CD4-positive, alpha-beta T cell (primary cell): ENCODE measurements at regions of chr12 and their contacts with region 1.

Region 1: DNA sequence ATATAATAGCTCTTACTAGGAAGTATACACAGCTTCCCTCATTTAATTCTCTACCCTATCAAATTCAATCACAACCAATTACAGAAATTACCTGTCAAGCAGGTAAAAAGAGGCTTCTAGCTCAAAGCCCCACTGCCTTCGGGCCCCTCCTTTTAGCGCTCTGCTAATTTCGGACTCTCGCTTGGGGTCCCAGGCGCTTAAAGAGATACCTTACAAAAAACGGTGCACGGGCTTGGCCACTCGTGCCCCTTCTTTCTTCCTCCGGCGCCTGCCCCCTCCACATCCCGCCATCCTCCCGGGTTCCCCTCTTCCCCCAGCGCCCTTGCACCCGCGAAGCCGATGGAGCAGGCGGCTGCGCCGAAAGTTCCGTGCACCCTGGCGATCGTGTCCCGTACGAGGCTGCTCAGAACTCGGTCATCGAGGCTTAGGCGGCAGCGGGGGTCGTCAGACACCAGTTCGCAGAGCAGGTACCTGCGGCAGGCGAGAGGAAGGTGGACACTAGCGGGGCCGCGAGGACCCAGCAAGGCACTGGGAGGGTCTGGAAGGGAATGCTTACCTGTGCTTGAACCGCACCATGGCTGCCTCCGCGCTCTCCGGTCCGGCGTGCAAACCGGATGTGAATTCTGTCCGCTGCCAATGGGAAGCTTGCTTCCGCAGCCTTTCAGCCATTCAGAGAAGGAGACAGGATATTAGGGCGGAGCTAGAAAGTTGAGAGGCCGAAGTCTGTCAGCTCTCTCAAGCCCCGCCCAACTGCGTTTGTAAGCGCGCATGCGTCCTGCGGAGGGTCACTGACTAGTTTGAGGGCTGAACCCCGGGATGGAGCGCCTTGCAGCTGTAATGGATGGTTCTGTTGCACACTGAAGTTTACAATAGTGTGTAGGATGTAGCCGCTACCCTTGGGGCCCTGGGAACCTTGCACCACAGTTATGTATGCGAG is at the start of gene POP5:
- DNase-seq: peak; percentile 80 to 97 (median 90)
- ATAC-seq: peak; percentile 90
- H3K4me3 ChIP-seq: peak within 1 kb of the TSS; percentile 92
- H3K4me3 Mint-ChIP-seq: peak within 1 kb of the TSS; percentile 97
- H3K27ac ChIP-seq: peak within 1 kb of the TSS; percentile 66 to 69
- H3K27ac Mint-ChIP-seq: peak within 1 kb of the TSS; percentile 85
- H3K4me1 ChIP-seq: peaks cover 32% of the 10 kb centered on the region
- H3K4me1 Mint-ChIP-seq: peaks cover 45% of the 10 kb centered on the region
- H3K27me3 ChIP-seq: no peaks in the 10 kb centered on the region
- H3K27me3 Mint-ChIP-seq: peaks cover 21% of the 10 kb centered on the region
- CTCF ChIP-seq: no peak
- total RNA-seq, gene POP5: 17.9 to 22.0 TPM

Region 2: GRCh38 chr12:120528861-120529525 is 52.1 kb before region 1 on chr12 and contains the start of gene COQ5:
- CTCF ChIA-PET with region 1: no interaction called
- POLR2A ChIA-PET with region 1: interaction called, 11 read pairs
- intact Hi-C with region 1: loop called in 1 of 2 experiments (anchors 1 kb)
- DNase-seq: peak; percentile 70 to 89 (median 79)
- ATAC-seq: peak; percentile 97
- H3K4me3 ChIP-seq: peak within 1 kb of the TSS; percentile 92
- H3K4me3 Mint-ChIP-seq: peak within 1 kb of the TSS; percentile 100
- H3K27ac ChIP-seq: peak within 1 kb of the TSS; percentile 69 to 73
- H3K27ac Mint-ChIP-seq: peak within 1 kb of the TSS; percentile 95
- H3K4me1 ChIP-seq: peaks cover 27% of the 10 kb centered on the region
- H3K4me1 Mint-ChIP-seq: peaks cover 32% of the 10 kb centered on the region
- H3K27me3 ChIP-seq: no peaks in the 10 kb centered on the region
- H3K27me3 Mint-ChIP-seq: no peaks in the 10 kb centered on the region
- CTCF ChIP-seq: no peak
- total RNA-seq, gene COQ5: 6.9 to 7.1 TPM

Region 3: GRCh38 chr12:120554678-120555077 is 26.4 kb before region 1 on chr12:
- CTCF ChIA-PET with region 1: no interaction called
- POLR2A ChIA-PET with region 1: interaction called, 13 read pairs
- intact Hi-C with region 1: no loop called
- DNase-seq: no peak
- ATAC-seq: no peak
- H3K4me3 ChIP-seq: no peak overlapping the region
- H3K4me3 Mint-ChIP-seq: no peak overlapping the region
- H3K27ac ChIP-seq: no peak overlapping the region
- H3K27ac Mint-ChIP-seq: peak overlapping the region; percentile 58
- H3K4me1 ChIP-seq: peaks cover 11% of the 10 kb centered on the region
- H3K4me1 Mint-ChIP-seq: peaks cover 15% of the 10 kb centered on the region
- H3K27me3 ChIP-seq: no peaks in the 10 kb centered on the region
- H3K27me3 Mint-ChIP-seq: no peaks in the 10 kb centered on the region
- CTCF ChIP-seq: no peak

Region 4: DNA sequence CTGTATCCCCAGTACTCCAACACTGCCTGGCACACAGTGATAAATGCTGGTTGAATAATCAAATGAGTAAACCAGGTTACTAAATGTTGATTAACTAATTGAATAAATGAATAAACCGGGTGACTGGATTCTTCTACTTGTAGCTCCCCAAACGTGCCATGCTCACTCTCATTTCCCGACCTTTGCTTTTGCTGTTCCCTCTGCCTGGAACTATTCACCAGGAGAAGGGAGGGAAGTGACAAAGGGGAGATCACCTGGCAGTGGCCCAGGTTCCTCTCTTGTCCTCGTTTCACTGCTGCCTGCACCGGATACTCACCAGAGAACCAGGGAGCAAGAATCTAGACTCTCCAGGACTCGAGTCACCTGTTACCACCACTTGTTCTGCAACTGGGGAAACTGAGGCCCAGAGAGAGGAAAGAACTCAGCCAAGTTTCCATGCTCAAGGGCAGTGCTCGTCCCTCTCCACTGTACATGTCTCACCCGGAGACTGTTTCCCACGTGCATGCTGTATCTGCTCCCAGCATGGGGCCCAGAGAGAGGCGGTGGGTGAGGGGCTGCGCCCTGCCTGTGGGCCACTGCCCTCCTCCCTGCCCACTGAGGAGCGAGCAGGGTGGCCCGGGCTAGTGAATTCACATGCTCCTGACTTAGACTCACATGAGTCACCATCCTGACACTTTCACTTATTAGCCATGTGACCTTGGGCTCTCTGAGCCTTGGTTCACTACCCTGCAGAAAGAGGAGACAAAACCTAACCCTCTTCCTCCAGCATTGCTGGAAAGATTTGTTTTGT is 17.8 kb after region 1 on chr12:
- CTCF ChIA-PET with region 1: no interaction called
- POLR2A ChIA-PET with region 1: no interaction called
- intact Hi-C with region 1: no loop called
- DNase-seq: peak in 2 of 14 experiments; percentile 47 to 56
- ATAC-seq: no peak
- H3K4me3 ChIP-seq: no peak overlapping the region
- H3K4me3 Mint-ChIP-seq: no peak overlapping the region
- H3K27ac ChIP-seq: no peak overlapping the region
- H3K27ac Mint-ChIP-seq: no peak overlapping the region
- H3K4me1 ChIP-seq: no peaks in the 10 kb centered on the region
- H3K4me1 Mint-ChIP-seq: no peaks in the 10 kb centered on the region
- H3K27me3 ChIP-seq: peaks cover 3 to 4% of the 10 kb centered on the region in 2 experiments
- H3K27me3 Mint-ChIP-seq: peaks cover 21% of the 10 kb centered on the region
- CTCF ChIP-seq: no peak

Region 5: DNA sequence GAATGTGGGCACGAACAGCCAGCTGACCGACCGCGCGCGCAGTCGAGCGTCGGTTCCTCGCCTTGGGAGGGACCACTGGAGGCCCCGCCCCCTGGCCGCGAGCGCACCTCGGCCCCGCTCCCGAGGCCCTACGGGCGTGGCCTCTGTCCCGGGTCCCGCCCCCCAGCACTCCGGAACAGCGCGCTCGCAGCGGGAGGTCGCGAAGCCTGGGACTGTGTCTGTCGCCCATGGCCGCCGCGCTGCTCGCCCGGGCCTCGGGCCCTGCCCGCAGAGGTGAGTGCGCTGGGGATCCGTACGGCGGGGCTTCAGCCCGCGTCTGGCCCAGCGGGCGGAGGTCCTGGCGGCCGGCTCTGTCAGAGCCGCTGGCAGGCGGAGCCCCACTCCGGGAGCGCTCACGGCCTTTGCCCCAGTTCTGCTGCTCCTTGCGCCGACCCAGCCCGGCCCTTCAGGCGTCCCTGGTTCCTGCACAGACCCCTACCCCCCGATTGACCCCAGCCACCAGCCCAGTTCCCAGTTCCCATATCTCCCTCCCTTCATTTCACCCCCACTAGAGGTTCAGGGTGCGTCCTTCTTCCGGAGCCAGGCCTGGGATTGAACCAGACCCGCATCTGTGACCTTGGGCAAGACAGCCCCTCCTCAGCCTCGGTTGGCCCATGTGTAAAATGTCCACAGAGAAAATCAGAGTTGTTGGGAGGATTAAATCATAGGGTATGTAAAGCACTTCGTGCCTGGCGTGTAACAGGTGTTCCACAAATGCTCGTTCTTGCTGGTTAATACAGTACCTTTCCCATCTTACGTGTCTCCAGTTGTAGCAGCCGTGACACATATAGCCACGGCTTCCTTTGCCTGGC is 144.8 kb after region 1 on chr12 and contains the start of gene ACADS:
- CTCF ChIA-PET with region 1: no interaction called
- POLR2A ChIA-PET with region 1: interaction called, 3 read pairs
- intact Hi-C with region 1: loop called in 1 of 2 experiments (anchors 5 kb)
- DNase-seq: peak; percentile 72 to 95 (median 88)
- ATAC-seq: peak; percentile 99
- H3K4me3 ChIP-seq: peak within 1 kb of the TSS; percentile 75
- H3K4me3 Mint-ChIP-seq: peak within 1 kb of the TSS; percentile 97
- H3K27ac ChIP-seq: peak within 1 kb of the TSS in 1 of 2 donors; percentile 18
- H3K27ac Mint-ChIP-seq: peak within 1 kb of the TSS; percentile 72
- H3K4me1 ChIP-seq: peaks cover 28% of the 10 kb centered on the region
- H3K4me1 Mint-ChIP-seq: peaks cover 21% of the 10 kb centered on the region
- H3K27me3 ChIP-seq: no peaks in the 10 kb centered on the region
- H3K27me3 Mint-ChIP-seq: no peaks in the 10 kb centered on the region
- CTCF ChIP-seq: no peak
- total RNA-seq, gene ACADS: 8.9 to 9.2 TPM

Region 6: GRCh38 chr12:121110211-121110940 is 529.3 kb after region 1 on chr12:
- CTCF ChIA-PET with region 1: no interaction called
- POLR2A ChIA-PET with region 1: no interaction called
- intact Hi-C with region 1: loop called (anchors 5 kb)
- DNase-seq: peak; percentile 33 to 87 (median 58)
- ATAC-seq: peak; percentile 82
- H3K4me3 ChIP-seq: no peak overlapping the region
- H3K4me3 Mint-ChIP-seq: no peak overlapping the region
- H3K27ac ChIP-seq: no peak overlapping the region
- H3K27ac Mint-ChIP-seq: no peak overlapping the region
- H3K4me1 ChIP-seq: no peaks in the 10 kb centered on the region
- H3K4me1 Mint-ChIP-seq: no peaks in the 10 kb centered on the region
- H3K27me3 ChIP-seq: no peaks in the 10 kb centered on the region
- H3K27me3 Mint-ChIP-seq: no peaks in the 10 kb centered on the region
- CTCF ChIP-seq: peak; percentile 99